ENCODE measurements at regions of chr5 and their contacts with region 1.

Region 1: GRCh38 chr5:55936100-55936693 is 58.6 kb downstream of the IL6ST start:
- DNase-seq: peak; percentile 80
- H3K4me3 ChIP-seq: no peak overlapping the region
- H3K27ac ChIP-seq: no peak overlapping the region
- H3K4me1 ChIP-seq: no peaks in the 10 kb centered on the region
- H3K27me3 ChIP-seq: no peaks in the 10 kb centered on the region
- CTCF ChIP-seq: peak; percentile 97

Region 2: GRCh38 chr5:55836191-55836590 is 100.0 kb before region 1 on chr5:
- CTCF ChIA-PET with region 1: interaction called, 12 read pairs
- POLR2A ChIA-PET with region 1: no interaction called
- intact Hi-C with region 1: no loop called
- DNase-seq: no peak
- H3K4me3 ChIP-seq: no peak overlapping the region
- H3K27ac ChIP-seq: no peak overlapping the region
- H3K4me1 ChIP-seq: no peaks in the 10 kb centered on the region
- H3K27me3 ChIP-seq: no peaks in the 10 kb centered on the region
- CTCF ChIP-seq: no peak

Region 3: GRCh38 chr5:56200856-56201666 is 264.9 kb after region 1 on chr5:
- CTCF ChIA-PET with region 1: interaction called, 9 read pairs
- POLR2A ChIA-PET with region 1: no interaction called
- intact Hi-C with region 1: loop called (anchors 1 kb)
- DNase-seq: peak; percentile 54
- H3K4me3 ChIP-seq: no peak overlapping the region
- H3K27ac ChIP-seq: no peak overlapping the region
- H3K4me1 ChIP-seq: no peaks in the 10 kb centered on the region
- H3K27me3 ChIP-seq: no peaks in the 10 kb centered on the region
- CTCF ChIP-seq: peak; percentile 63

Region 4: DNA sequence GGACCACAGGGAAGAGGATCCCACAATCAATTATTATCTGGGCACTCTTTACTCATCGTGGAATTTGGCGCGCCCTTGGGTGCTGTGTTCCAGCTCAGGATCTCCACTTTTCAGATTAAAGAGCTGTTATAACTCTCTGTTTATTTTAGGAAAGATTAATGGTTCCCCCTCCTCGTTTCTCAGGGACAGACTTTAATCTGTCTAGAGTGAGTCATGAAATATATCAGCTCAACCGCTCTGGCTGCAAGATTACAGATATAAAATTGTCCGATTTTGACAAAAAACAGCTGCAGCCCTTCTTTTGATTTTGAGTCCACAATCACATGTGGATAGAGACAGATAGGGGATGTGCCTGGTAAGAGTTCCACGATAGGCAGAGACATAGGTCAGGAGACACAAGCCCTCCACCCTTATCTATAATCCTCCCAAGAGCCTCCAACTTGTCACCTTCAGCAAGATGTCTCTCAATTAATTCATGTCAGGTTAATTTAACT is 374.6 kb after region 1 on chr5:
- CTCF ChIA-PET with region 1: no interaction called
- POLR2A ChIA-PET with region 1: no interaction called
- intact Hi-C with region 1: no loop called
- DNase-seq: peak; percentile 12
- H3K4me3 ChIP-seq: no peak overlapping the region
- H3K27ac ChIP-seq: no peak overlapping the region
- H3K4me1 ChIP-seq: no peaks in the 10 kb centered on the region
- H3K27me3 ChIP-seq: no peaks in the 10 kb centered on the region
- CTCF ChIP-seq: no peak

Region 5: GRCh38 chr5:56325040-56325439 is 388.8 kb after region 1 on chr5:
- CTCF ChIA-PET with region 1: interaction called, 10 read pairs
- POLR2A ChIA-PET with region 1: no interaction called
- intact Hi-C with region 1: no loop called
- DNase-seq: no peak
- H3K4me3 ChIP-seq: no peak overlapping the region
- H3K27ac ChIP-seq: no peak overlapping the region
- H3K4me1 ChIP-seq: no peaks in the 10 kb centered on the region
- H3K27me3 ChIP-seq: no peaks in the 10 kb centered on the region
- CTCF ChIP-seq: no peak

Region 6: DNA sequence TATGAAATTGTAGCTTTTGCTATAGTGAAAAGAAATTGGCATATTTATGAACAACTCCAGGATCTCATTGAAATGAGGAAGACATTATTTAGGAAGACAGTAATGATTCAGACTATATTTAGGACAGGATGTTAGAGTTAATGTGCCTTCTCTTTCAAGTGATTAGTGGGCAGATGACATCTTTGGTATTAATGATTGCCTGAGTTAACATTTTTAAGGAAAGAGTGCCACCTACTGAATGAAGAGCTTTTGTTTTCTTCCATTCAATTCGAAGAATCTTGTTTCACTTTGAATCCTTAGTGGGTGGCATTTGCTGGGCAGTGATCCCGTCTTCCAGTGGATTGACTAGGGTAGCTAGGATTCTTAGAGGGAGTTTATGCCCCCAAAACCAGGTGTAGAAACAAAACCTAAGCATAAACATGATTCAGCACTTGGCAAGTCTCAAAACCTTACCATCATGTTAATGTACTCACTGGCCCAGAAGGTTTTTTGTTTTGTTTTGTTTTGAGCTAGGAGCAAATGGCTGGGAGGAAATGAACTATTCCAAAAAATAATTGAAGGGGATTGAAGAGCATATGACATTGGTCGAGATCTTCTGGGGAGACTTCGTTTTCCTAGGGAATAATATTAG is 902.3 kb after region 1 on chr5:
- CTCF ChIA-PET with region 1: interaction called, 3 read pairs
- POLR2A ChIA-PET with region 1: no interaction called
- intact Hi-C with region 1: loop called (anchors 5 kb)
- DNase-seq: peak; percentile 76
- H3K4me3 ChIP-seq: no peak overlapping the region
- H3K27ac ChIP-seq: no peak overlapping the region
- H3K4me1 ChIP-seq: no peaks in the 10 kb centered on the region
- H3K27me3 ChIP-seq: no peaks in the 10 kb centered on the region
- CTCF ChIP-seq: peak; percentile 63